ENCODE measurements at regions of chr5 and their contacts with region 1.

Region 1: GRCh38 chr5:140700177-140701144 is at the start of gene ZMAT2:
- DNase-seq: peak; percentile 94 to 99 (median 97)
- H3K4me3 ChIP-seq: peak within 1 kb of the TSS; percentile 52 to 99 (median 86)
- H3K27ac ChIP-seq: peak within 1 kb of the TSS in 56 of 59 donors; percentile 10 to 89 (median 72)
- H3K27me3 ChIP-seq: no peaks in the 10 kb centered on the region
- CTCF ChIP-seq: peak in 25 of 56 donors; percentile 3 to 51 (median 27)
- total RNA-seq, gene ZMAT2: 46.1 to 101 (median 76.4) TPM

Region 2: GRCh38 chr5:140547508-140548299 is 152.8 kb before region 1 on chr5 and contains the start of gene EIF4EBP3:
- intact Hi-C with region 1: loop called in 1 of 2 experiments (anchors 5 kb)
- DNase-seq: peak; percentile 93 to 98 (median 97)
- H3K4me3 ChIP-seq: peak within 1 kb of the TSS; percentile 27 to 93 (median 59)
- H3K27ac ChIP-seq: peak within 1 kb of the TSS; percentile 53 to 97 (median 89)
- H3K27me3 ChIP-seq: no peaks in the 10 kb centered on the region
- CTCF ChIP-seq: peak in 52 of 56 donors; percentile 22 to 71 (median 52)
- total RNA-seq, gene EIF4EBP3: 1.2 to 16.5 (median 5.9) TPM

Region 3: DNA sequence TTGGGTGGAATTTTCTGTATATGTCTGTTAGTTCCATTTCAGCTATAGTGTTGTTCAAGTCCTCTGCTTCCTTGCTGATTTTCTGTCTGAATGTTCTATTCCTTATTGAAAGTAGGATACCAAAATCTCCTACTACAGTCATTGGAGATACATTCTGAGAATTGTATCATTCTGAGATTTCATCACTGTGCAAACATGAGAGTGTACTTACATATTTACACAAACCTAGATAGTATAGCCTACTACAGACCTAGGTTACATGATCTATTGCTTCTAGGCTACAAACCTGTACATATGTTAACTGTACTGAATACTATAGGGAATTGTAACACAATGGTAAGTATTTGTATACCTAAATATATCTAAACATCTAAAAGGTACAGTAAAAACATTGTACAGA is 112.7 kb after region 1 on chr5:
- intact Hi-C with region 1: no loop called
- DNase-seq: no peak
- H3K4me3 ChIP-seq: no peak overlapping the region
- H3K27ac ChIP-seq: no peak overlapping the region
- H3K27me3 ChIP-seq: no peaks in the 10 kb centered on the region
- CTCF ChIP-seq: no peak

Region 4: DNA sequence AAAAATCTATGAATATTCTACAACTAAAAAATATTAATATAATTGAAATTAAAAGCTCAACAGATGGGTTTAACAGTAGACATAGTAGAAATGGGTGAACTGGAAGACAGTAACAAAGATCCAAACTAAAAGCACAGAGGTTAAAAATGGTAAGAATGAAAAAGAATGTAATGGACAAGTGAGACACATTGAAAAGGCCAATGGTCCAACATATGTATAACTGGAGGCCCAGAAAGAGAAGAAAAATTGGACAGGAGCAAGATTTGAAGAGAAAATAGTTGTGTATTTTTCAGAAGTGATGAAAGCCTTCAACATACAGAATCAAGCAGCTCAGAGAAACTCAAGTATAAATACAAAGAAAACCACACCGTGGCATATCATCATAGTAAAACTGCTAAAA is 847.0 kb after region 1 on chr5:
- intact Hi-C with region 1: no loop called
- DNase-seq: no peak
- H3K4me3 ChIP-seq: no peak overlapping the region
- H3K27ac ChIP-seq: no peak overlapping the region
- H3K27me3 ChIP-seq: no peaks in the 10 kb centered on the region
- CTCF ChIP-seq: no peak